Activated naive CD4-positive, alpha-beta T cell treated with anti-CD3 and anti-CD28 coated beads for 36 hours (primary cell): ENCODE measurements at regions of chr2 and their contacts with region 1.

Region 1: GRCh38 chr2:108938077-108938710 is 50.8 kb downstream of the EDAR start:
- DNase-seq: peak; percentile 44
- H3K4me3 Mint-ChIP-seq: peak overlapping the region; percentile 1
- H3K27ac Mint-ChIP-seq: no peak overlapping the region
- H3K4me1 Mint-ChIP-seq: peaks cover 25% of the 10 kb centered on the region
- H3K27me3 Mint-ChIP-seq: no peaks in the 10 kb centered on the region

Region 2: DNA sequence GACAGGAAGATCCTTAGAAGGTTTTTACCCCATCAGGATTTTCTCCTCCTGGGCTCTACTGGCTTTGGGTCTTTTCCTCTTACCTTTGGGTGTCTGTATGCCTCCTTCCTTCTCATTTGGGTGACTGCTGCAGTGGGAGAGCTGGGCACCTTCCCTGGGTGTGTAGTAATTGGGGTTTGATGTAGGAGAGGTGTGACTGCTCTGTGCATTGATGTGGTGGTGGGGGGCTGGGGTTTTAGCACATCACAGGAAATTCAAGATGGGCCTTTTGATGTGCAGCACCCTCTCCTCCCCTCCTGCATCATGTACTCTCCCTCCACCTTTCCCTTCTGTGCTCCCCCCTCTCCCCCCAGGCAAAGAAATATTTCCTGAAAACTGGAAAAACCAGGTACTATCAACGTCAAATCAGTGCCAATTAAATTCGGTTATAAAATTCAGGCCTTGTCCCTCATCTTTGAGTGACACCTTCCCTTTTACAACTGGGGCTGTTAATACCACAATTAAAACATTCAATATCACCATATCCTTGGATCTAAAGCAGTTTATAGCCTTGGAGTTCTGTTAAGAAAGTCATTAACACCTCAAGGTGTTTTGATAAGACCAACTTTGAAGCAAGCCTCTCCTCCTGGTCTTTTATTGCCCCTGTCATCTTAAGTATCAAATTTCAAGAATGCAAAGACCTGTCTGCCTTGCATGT is 27.5 kb after region 1 on chr2:
- CTCF ChIA-PET with region 1: interaction called, 3 read pairs
- intact Hi-C with region 1: loop called (anchors 2 kb)
- DNase-seq: peak; percentile 74
- H3K4me3 Mint-ChIP-seq: no peak overlapping the region
- H3K27ac Mint-ChIP-seq: no peak overlapping the region
- H3K4me1 Mint-ChIP-seq: peaks cover 93% of the 10 kb centered on the region
- H3K27me3 Mint-ChIP-seq: no peaks in the 10 kb centered on the region

Region 3: DNA sequence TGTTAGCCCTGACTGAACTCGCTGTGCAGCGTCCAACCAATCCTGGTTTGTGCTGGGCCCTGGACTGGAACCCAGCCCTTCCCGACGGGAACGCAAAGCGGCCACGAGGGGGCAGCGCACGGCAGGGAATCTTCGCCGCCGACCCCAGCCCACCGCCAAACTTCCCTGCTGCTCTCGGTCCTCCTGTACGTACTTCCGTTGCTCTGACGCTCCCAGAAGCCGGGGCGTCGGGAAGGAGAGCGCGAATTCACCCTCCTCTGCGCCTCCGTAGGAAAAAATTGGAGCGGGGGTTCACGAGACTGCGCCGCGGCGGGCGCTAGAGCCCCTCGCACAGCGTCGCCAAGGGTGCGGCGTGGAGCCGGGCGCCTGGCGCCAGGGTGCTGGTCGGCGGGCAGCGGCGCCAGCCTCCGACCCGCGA is 189.9 kb after region 1 on chr2:
- CTCF ChIA-PET with region 1: no interaction called
- intact Hi-C with region 1: no loop called
- DNase-seq: peak; percentile 81
- H3K4me3 Mint-ChIP-seq: peak overlapping the region; percentile 76
- H3K27ac Mint-ChIP-seq: no peak overlapping the region
- H3K4me1 Mint-ChIP-seq: peaks cover 42% of the 10 kb centered on the region
- H3K27me3 Mint-ChIP-seq: peaks cover 6% of the 10 kb centered on the region